GM12878 (cell line): ENCODE measurements at regions of chr18 and their contacts with region 1.

Region 1: GRCh38 chr18:11149441-11150270 is at the start of gene PIEZO2:
- DNase-seq: peak; percentile 43
- ATAC-seq: peak; percentile 89
- H3K4me3 ChIP-seq: peak within 1 kb of the TSS; percentile 95
- H3K27ac ChIP-seq: peak within 1 kb of the TSS; percentile 88
- H3K4me1 ChIP-seq: peaks cover 23% of the 10 kb centered on the region
- H3K27me3 ChIP-seq: no peaks in the 10 kb centered on the region
- CTCF ChIP-seq: no peak
- EP300 ChIP-seq: no peak
- POLR2A ChIP-seq: peak; percentile 89
- RAD21 ChIP-seq: no peak
- polyA plus RNA-seq, gene PIEZO2: 6.7 to 7.1 TPM

Region 2: GRCh38 chr18:9861157-9861556 is 1288.5 kb before region 1 on chr18:
- CTCF ChIA-PET with region 1: no interaction called
- POLR2A ChIA-PET with region 1: no interaction called
- RAD21 ChIA-PET with region 1: no interaction called
- SMC1A ChIA-PET with region 1: no interaction called
- in situ Hi-C with region 1: no loop called
- intact Hi-C with region 1: no loop called
- DNase-seq: peak; percentile 49
- ATAC-seq: peak; percentile 93
- H3K4me3 ChIP-seq: no peak overlapping the region
- H3K27ac ChIP-seq: no peak overlapping the region
- H3K4me1 ChIP-seq: peaks cover 7% of the 10 kb centered on the region; the same call in 1 of the 2 replicates
- H3K27me3 ChIP-seq: no peaks in the 10 kb centered on the region
- CTCF ChIP-seq: no peak
- EP300 ChIP-seq: no peak
- POLR2A ChIP-seq: no peak
- RAD21 ChIP-seq: no peak

Region 3: GRCh38 chr18:9961041-9961440 is 1188.6 kb before region 1 on chr18:
- CTCF ChIA-PET with region 1: no interaction called
- POLR2A ChIA-PET with region 1: no interaction called
- RAD21 ChIA-PET with region 1: no interaction called
- SMC1A ChIA-PET with region 1: no interaction called
- in situ Hi-C with region 1: no loop called
- intact Hi-C with region 1: loop called (anchors 10 kb)
- DNase-seq: no peak
- ATAC-seq: peak; percentile 59
- H3K4me3 ChIP-seq: no peak overlapping the region
- H3K27ac ChIP-seq: no peak overlapping the region
- H3K4me1 ChIP-seq: no peaks in the 10 kb centered on the region
- H3K27me3 ChIP-seq: no peaks in the 10 kb centered on the region
- CTCF ChIP-seq: no peak
- EP300 ChIP-seq: no peak
- POLR2A ChIP-seq: no peak
- RAD21 ChIP-seq: no peak

Region 4: GRCh38 chr18:10560450-10561045 is 589.1 kb before region 1 on chr18:
- CTCF ChIA-PET with region 1: interaction called, 191 read pairs
- POLR2A ChIA-PET with region 1: interaction called, 6 read pairs
- RAD21 ChIA-PET with region 1: interaction called, 56 read pairs
- SMC1A ChIA-PET with region 1: interaction called, 84 read pairs
- in situ Hi-C with region 1: loop called (anchors 5 kb)
- intact Hi-C with region 1: loop called (anchors 1 kb)
- DNase-seq: peak; percentile 48
- ATAC-seq: peak; percentile 90
- H3K4me3 ChIP-seq: peak overlapping the region; percentile 21; the same call in 1 of the 2 replicates
- H3K27ac ChIP-seq: peak overlapping the region; percentile 66
- H3K4me1 ChIP-seq: peaks cover 5% of the 10 kb centered on the region
- H3K27me3 ChIP-seq: no peaks in the 10 kb centered on the region
- CTCF ChIP-seq: peak; percentile 69 to 80 (median 78)
- EP300 ChIP-seq: no peak
- POLR2A ChIP-seq: no peak
- RAD21 ChIP-seq: peak; percentile 89

Region 5: GRCh38 chr18:10851824-10852319 is 297.8 kb before region 1 on chr18:
- CTCF ChIA-PET with region 1: interaction called, 225 read pairs
- POLR2A ChIA-PET with region 1: interaction called, 7 read pairs
- RAD21 ChIA-PET with region 1: interaction called, 127 read pairs
- SMC1A ChIA-PET with region 1: interaction called, 256 read pairs
- in situ Hi-C with region 1: no loop called
- intact Hi-C with region 1: loop called (anchors 1 kb)
- DNase-seq: peak; percentile 61
- ATAC-seq: peak; percentile 80
- H3K4me3 ChIP-seq: no peak overlapping the region
- H3K27ac ChIP-seq: peak overlapping the region; percentile 69
- H3K4me1 ChIP-seq: peaks cover 28% of the 10 kb centered on the region; the same call in 1 of the 2 replicates
- H3K27me3 ChIP-seq: no peaks in the 10 kb centered on the region
- CTCF ChIP-seq: peak; percentile 57 to 83 (median 61); a peak in 5 of 6 replicates
- EP300 ChIP-seq: no peak
- POLR2A ChIP-seq: no peak
- RAD21 ChIP-seq: peak; percentile 96

Region 6: DNA sequence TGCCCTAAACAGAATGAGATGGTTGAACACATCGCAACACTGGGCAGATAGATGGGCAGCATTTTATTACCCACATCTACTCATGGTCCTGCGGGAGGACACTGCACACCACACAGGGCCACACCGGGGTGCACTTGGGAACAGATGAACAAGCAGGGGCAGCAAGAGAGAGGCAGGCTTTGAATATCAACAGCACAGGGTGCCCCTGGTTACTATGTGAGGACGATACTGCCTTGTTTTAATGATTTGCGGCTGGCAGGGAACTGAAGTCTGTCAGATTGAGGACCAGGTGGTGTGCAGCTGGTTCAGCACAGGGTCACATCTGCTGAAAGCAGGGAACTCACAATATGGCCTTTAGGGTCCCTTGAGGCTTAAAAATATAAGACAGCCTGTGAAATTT is 196.0 kb before region 1 on chr18:
- CTCF ChIA-PET with region 1: interaction called, 9 read pairs
- POLR2A ChIA-PET with region 1: interaction called, 15 read pairs
- RAD21 ChIA-PET with region 1: interaction called, 21 read pairs
- SMC1A ChIA-PET with region 1: interaction called, 11 read pairs
- in situ Hi-C with region 1: loop called (anchors 5 kb)
- intact Hi-C with region 1: loop called (anchors 1 kb)
- DNase-seq: peak; percentile 84
- ATAC-seq: peak; percentile 65
- H3K4me3 ChIP-seq: peak overlapping the region; percentile 30; the same call in 1 of the 2 replicates
- H3K27ac ChIP-seq: peak overlapping the region; percentile 100
- H3K4me1 ChIP-seq: peaks cover 41% of the 10 kb centered on the region
- H3K27me3 ChIP-seq: no peaks in the 10 kb centered on the region
- CTCF ChIP-seq: no peak; a peak in 1 of 6 replicates
- EP300 ChIP-seq: peak; percentile 55 to 69; a peak in 3 of 4 replicates
- POLR2A ChIP-seq: peak; percentile 80
- RAD21 ChIP-seq: peak; percentile 21; the same call in 1 of the 2 replicates

Region 7: DNA sequence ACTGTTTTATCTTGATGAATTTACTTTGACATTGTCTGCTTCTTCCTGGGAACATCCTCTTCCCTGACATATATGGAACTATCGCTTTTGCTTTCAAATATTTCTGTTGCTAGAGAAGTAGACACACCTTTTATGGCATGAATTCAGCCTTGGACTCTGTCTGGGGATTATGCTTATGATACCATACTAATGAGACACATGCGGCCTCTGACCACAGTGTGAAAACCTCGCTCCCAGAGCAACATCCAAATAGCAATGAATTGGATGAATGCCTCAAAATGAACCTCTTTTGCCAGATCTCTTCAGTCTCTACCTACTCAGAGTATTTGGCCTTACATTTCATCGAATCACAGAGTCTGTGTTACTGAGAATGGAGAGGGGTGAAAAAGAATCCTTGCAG is 71.2 kb before region 1 on chr18:
- CTCF ChIA-PET with region 1: interaction called, 4 read pairs
- POLR2A ChIA-PET with region 1: interaction called, 8 read pairs
- RAD21 ChIA-PET with region 1: interaction called, 3 read pairs
- SMC1A ChIA-PET with region 1: interaction called, 12 read pairs
- in situ Hi-C with region 1: no loop called
- intact Hi-C with region 1: loop called (anchors 5 kb)
- DNase-seq: peak; percentile 46
- ATAC-seq: peak; percentile 87
- H3K4me3 ChIP-seq: no peak overlapping the region; the same call in 1 of the 2 replicates
- H3K27ac ChIP-seq: peak overlapping the region; percentile 66
- H3K4me1 ChIP-seq: peaks cover 27% of the 10 kb centered on the region
- H3K27me3 ChIP-seq: no peaks in the 10 kb centered on the region
- CTCF ChIP-seq: no peak
- EP300 ChIP-seq: peak; percentile 64 to 78; a peak in 3 of 4 replicates
- POLR2A ChIP-seq: no peak
- RAD21 ChIP-seq: no peak